CD4-positive, alpha-beta memory T cell (primary cell): ENCODE measurements at regions of chr2 and their contacts with region 1.

Region 1: DNA sequence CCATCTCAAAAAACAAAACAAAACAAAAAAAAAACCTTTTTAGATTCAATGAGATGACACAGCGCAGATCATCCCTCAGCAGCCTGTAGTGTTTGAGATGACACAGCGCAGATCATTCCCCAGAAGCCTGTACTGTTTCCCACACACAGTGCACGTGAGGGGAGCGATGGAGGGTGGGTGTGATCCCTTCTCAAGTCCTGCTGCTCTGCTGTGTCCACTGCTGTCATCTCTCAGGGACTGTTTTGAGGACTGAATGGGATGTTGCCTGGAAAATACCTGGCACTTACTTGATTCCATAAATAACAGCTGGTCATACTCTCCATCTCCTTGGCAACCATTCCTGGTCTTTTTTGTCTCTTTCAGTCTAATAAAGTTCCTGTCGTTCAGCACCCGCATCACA is 25.7 kb downstream of the TGOLN2 start:
- DNase-seq: no peak
- H3K4me3 ChIP-seq: no peak overlapping the region
- H3K4me3 Mint-ChIP-seq: no peak overlapping the region
- H3K27ac ChIP-seq: no peak overlapping the region
- H3K27ac Mint-ChIP-seq: no peak overlapping the region
- H3K4me1 ChIP-seq: peaks cover 3% of the 10 kb centered on the region
- H3K4me1 Mint-ChIP-seq: peaks cover 0 to 20% (median 14%) of the 10 kb centered on the region in 4 donors
- H3K27me3 ChIP-seq: peaks cover 5% of the 10 kb centered on the region
- H3K27me3 Mint-ChIP-seq: peaks cover 6 to 7% of the 10 kb centered on the region in 2 donors

Region 2: DNA sequence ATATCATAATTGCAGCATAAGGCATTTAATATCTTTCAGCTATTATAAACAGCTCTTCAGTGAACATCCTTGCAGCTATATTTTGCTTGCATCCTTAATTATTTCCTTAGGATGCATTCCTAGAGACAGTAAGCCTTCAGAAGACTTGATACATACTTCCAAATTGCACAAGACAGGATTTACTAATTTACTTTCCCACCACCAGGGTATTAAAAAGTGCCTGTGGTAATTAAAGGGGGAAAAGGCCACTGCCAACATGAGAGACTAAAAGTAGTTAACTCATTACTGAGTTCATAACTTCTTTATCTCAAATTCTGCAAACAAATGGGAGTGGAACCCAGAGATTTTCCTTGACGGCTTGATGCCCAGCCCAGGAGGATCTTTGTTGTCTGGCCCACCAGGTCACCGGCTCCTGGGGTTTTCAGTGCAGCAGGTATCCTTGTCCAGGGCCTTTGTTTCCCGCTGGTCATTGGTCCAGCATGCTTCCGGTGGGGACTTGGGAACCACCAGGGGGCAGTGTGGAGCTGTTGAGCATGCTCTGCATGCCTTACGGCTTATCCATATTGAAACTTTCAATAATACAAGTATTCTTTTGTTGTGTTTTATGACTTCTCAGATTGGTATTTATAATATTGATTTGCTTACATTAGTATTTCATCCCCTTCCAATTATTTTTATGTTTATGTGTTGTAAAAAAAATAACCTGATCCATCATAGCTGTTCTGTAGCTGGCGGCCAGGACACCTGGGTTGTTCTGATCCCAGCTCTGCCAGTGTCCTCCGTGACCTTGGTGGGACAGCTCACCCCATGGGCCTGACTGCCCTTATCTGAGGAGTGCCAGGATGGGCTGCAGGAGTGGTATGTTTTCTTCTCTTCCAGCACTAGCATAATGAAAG is 35.7 kb before region 1 on chr2:
- CTCF ChIA-PET with region 1: interaction called, 187 read pairs
- POLR2A ChIA-PET with region 1: no interaction called
- intact Hi-C with region 1: loop called (anchors 1 kb)
- DNase-seq: peak; percentile 51 to 63 (median 54)
- H3K4me3 ChIP-seq: no peak overlapping the region
- H3K4me3 Mint-ChIP-seq: no peak overlapping the region
- H3K27ac ChIP-seq: no peak overlapping the region
- H3K27ac Mint-ChIP-seq: no peak overlapping the region
- H3K4me1 ChIP-seq: no peaks in the 10 kb centered on the region
- H3K4me1 Mint-ChIP-seq: no peaks in the 10 kb centered on the region
- H3K27me3 ChIP-seq: no peaks in the 10 kb centered on the region
- H3K27me3 Mint-ChIP-seq: peaks cover 2 to 12% of the 10 kb centered on the region in 2 donors

Region 3: DNA sequence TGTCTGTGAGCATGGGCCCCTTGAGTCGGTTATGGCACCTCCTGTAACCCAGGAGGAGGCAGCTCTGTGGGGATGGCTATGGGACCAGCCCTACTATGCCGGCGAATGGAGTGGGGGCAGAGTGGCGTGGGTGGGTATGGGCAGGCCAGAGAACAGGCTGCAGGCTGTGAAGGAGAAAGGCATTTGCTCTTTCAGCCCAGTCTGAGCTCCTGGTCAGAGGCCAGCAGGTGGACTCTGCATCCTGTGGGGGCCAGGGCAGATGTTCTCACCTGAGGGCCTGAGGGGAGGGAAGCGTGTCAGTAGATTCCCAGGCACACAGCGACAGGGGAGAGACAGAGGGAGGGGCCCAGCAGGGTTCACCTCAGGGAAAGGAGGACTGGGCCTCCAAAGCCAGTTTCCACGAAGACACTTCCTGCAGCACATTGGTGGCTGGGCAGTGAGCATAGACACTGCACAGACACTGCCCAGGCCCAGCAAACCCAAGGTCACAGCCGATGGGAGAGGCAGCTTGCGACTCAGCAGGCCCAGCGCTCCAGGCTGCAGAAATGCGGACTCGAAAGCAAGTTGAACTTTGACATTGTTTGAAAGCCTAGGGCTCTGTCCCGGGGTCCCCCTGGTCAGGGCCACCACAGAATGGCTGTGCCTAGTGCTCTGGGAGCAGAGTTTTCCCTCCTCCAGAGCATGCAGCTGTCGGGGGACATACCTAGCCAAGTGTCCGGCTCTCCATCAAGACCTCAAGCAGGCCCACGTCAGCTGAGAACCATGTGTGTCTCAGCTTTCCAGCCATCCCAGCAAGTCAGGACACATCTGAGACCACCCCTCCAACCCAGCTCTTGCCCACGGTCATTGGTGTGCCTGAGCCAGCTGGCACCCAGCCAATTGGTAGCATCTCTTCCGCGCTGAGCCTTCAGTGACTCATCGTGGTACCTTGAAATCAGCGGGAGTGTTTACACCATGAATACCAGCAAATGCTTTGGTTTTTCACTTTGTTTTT is 28.1 kb before region 1 on chr2:
- CTCF ChIA-PET with region 1: interaction called, 187 read pairs
- POLR2A ChIA-PET with region 1: interaction called, 3 read pairs
- intact Hi-C with region 1: no loop called
- DNase-seq: no peak
- H3K4me3 ChIP-seq: no peak overlapping the region
- H3K4me3 Mint-ChIP-seq: no peak overlapping the region
- H3K27ac ChIP-seq: no peak overlapping the region
- H3K27ac Mint-ChIP-seq: no peak overlapping the region
- H3K4me1 ChIP-seq: no peaks in the 10 kb centered on the region
- H3K4me1 Mint-ChIP-seq: no peaks in the 10 kb centered on the region
- H3K27me3 ChIP-seq: no peaks in the 10 kb centered on the region
- H3K27me3 Mint-ChIP-seq: peaks cover 8 to 11% of the 10 kb centered on the region in 2 donors

Region 4: GRCh38 chr2:85288244-85288725 is 13.8 kb before region 1 on chr2:
- CTCF ChIA-PET with region 1: interaction called, 156 read pairs
- POLR2A ChIA-PET with region 1: interaction called, 3 read pairs
- intact Hi-C with region 1: no loop called
- DNase-seq: no peak
- H3K4me3 ChIP-seq: no peak overlapping the region
- H3K4me3 Mint-ChIP-seq: no peak overlapping the region
- H3K27ac ChIP-seq: no peak overlapping the region
- H3K27ac Mint-ChIP-seq: no peak overlapping the region
- H3K4me1 ChIP-seq: peaks cover 10% of the 10 kb centered on the region
- H3K4me1 Mint-ChIP-seq: peaks cover 16 to 28% (median 23%) of the 10 kb centered on the region in 4 donors
- H3K27me3 ChIP-seq: no peaks in the 10 kb centered on the region
- H3K27me3 Mint-ChIP-seq: no peaks in the 10 kb centered on the region

Region 5: GRCh38 chr2:85318222-85319074 is 16.3 kb after region 1 on chr2:
- CTCF ChIA-PET with region 1: interaction called, 33 read pairs
- POLR2A ChIA-PET with region 1: interaction called, 268 read pairs
- intact Hi-C with region 1: no loop called
- DNase-seq: peak in 1 of 5 donors; percentile 61
- H3K4me3 ChIP-seq: no peak overlapping the region
- H3K4me3 Mint-ChIP-seq: peak overlapping the region; percentile 5 to 82 (median 55)
- H3K27ac ChIP-seq: peak overlapping the region; percentile 42
- H3K27ac Mint-ChIP-seq: peak overlapping the region; percentile 23 to 99 (median 77)
- H3K4me1 ChIP-seq: peaks cover 54% of the 10 kb centered on the region
- H3K4me1 Mint-ChIP-seq: peaks cover 49 to 71% (median 58%) of the 10 kb centered on the region in 4 donors
- H3K27me3 ChIP-seq: no peaks in the 10 kb centered on the region
- H3K27me3 Mint-ChIP-seq: no peaks in the 10 kb centered on the region

Region 6: DNA sequence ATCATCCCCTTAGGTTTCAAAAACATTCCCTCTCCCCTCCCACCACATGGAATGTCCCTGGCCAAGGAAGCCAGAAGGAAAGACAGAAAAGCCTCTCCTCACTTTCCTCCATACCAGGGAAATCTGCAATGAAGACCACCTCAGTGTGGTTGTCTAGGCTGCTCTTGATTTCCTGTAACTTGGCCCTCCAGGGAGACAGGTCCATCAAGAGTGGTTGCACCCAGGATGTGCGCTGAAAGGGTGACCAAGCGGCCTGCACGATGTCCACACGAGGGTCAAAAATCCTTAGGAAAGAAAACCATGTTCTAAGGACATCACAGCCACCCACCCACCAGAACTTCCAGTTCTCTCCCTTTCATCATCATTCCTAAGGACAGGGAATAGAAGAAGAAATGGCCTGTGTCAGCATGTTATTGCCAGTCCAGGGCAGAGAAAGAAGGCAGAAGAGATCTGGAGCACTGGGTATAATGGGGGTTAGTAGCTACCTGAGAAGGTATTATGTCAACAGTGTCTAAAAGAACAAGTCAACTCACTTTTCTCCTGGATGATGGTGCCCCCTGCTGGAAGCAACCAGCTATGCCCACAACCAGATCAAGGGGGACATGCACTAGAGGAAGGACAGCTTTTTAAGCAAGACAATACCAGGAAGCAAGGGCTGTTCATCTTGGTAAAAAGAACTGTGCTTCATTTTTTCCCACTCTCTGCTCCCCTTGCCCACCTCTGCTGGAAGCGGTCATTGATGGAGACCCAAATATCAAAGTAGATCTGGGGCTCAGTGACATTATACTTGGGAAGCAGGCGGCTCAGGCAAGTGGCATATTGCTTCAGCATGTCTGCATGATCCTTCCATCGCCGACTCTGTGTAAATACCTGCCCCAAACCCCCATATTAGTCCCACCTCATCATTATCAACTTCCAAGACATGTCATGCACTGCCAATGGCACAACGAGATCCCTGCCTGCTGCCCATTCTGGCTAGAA is 249.9 kb after region 1 on chr2:
- CTCF ChIA-PET with region 1: interaction called, 7 read pairs
- POLR2A ChIA-PET with region 1: no interaction called
- intact Hi-C with region 1: loop called (anchors 1 kb)
- DNase-seq: peak; percentile 86 to 90 (median 87)
- H3K4me3 ChIP-seq: no peak overlapping the region
- H3K4me3 Mint-ChIP-seq: no peak overlapping the region
- H3K27ac ChIP-seq: no peak overlapping the region
- H3K27ac Mint-ChIP-seq: peak overlapping the region; percentile 22 to 70 (median 47)
- H3K4me1 ChIP-seq: no peaks in the 10 kb centered on the region
- H3K4me1 Mint-ChIP-seq: peaks cover 0 to 7% (median 4%) of the 10 kb centered on the region in 4 donors
- H3K27me3 ChIP-seq: no peaks in the 10 kb centered on the region
- H3K27me3 Mint-ChIP-seq: no peaks in the 10 kb centered on the region